PC-3 (cell line): ENCODE measurements at regions of chr14 and their contacts with region 1.

Region 1: GRCh38 chr14:64612021-64612380 is 62.2 kb downstream of the PPP1R36 start:
- DNase-seq: peak; percentile 53
- ATAC-seq: peak; percentile 57
- H3K4me3 ChIP-seq: no peak overlapping the region
- H3K27ac ChIP-seq: peak overlapping the region; percentile 43
- H3K4me1 ChIP-seq: peaks cover 30% of the 10 kb centered on the region
- H3K27me3 ChIP-seq: no peaks in the 10 kb centered on the region
- CTCF ChIP-seq: no peak

Region 2: DNA sequence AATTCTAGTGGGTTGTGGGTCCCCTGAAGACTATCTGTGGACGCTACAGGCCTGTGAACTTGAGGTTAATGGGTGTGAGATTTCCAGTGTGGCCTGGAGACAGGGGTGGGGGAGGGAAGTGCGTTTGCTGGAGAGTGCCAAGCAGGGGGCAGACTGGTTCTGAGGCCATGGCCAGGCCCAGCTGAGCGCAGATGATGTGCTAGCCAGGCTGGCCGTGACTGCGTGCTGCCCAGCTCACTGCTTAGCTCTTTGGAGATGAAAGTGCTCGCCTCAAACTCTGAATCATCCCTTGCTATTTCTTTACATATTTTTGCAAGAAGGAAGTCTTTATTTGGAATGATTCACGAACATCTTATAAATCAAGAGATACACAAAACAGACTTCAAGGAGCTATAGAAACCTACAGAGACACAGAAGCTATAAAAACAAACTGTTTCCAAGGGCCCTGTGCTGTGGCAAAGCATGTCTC is 17.0 kb after region 1 on chr14:
- CTCF ChIA-PET with region 1: interaction called, 3 read pairs
- POLR2A ChIA-PET with region 1: interaction called, 6 read pairs
- intact Hi-C with region 1: loop called (anchors 1 kb)
- DNase-seq: peak; percentile 92
- ATAC-seq: peak; percentile 98
- H3K4me3 ChIP-seq: no peak overlapping the region
- H3K27ac ChIP-seq: peak overlapping the region; percentile 84
- H3K4me1 ChIP-seq: peaks cover 20% of the 10 kb centered on the region
- H3K27me3 ChIP-seq: no peaks in the 10 kb centered on the region
- CTCF ChIP-seq: peak; percentile 25; the same call in 1 of the 2 replicates

Region 3: GRCh38 chr14:65281991-65282895 is 670.2 kb after region 1 on chr14:
- CTCF ChIA-PET with region 1: no interaction called
- POLR2A ChIA-PET with region 1: no interaction called
- intact Hi-C with region 1: no loop called
- DNase-seq: no peak
- ATAC-seq: peak; percentile 57
- H3K4me3 ChIP-seq: no peak overlapping the region
- H3K27ac ChIP-seq: no peak overlapping the region
- H3K4me1 ChIP-seq: peaks cover 30% of the 10 kb centered on the region
- H3K27me3 ChIP-seq: no peaks in the 10 kb centered on the region
- CTCF ChIP-seq: no peak

Region 4: GRCh38 chr14:65471038-65471878 is 859.3 kb after region 1 on chr14:
- CTCF ChIA-PET with region 1: no interaction called
- POLR2A ChIA-PET with region 1: no interaction called
- intact Hi-C with region 1: no loop called
- DNase-seq: no peak
- ATAC-seq: peak; percentile 33; the same call in 1 of the 2 replicates
- H3K4me3 ChIP-seq: no peak overlapping the region
- H3K27ac ChIP-seq: no peak overlapping the region
- H3K4me1 ChIP-seq: no peaks in the 10 kb centered on the region
- H3K27me3 ChIP-seq: no peaks in the 10 kb centered on the region
- CTCF ChIP-seq: no peak